Sigmoid colon (tissue), 7 donors: ENCODE measurements at regions of chr20 and their contacts with region 1.

Region 1: DNA sequence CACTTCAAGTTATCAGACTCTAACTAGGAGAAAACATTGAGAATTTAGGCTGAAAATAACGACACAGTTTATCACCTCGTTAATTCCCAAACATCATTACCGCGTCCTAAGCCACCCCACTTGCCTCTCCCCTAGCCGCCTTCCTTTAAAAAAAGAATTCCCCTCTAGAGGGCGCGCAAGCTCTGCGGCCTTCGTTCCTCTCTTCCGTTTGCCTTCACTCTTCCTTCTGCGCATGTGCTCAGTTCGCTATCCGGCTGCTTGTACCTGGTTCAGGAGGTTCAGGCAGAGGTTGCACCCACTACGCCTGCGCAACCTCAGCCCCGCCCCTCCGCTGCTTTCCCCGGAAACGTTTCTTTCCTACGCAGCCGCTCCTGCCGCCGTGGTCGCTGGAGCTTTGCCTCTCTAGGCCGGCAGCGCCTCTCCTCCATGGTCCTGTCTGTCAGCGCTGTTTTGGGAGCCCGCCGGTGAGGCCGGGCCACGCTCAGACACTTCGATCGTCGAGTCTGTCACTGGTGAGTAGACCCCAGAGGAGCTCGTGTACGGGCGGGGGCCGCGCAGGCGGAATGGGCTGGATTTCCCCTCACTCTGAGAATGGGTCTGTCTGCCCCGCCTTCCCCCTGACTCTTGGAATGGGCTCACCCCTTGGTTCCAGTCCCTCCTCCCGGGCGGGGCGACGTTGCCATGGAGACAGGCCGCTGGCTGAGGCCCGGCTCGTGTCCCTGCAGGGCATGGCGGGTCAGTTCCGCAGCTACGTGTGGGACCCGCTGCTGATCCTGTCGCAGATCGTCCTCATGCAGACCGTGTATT is at the start of gene SYS1:
- DNase-seq: peak; percentile 99
- H3K4me3 ChIP-seq: peak within 1 kb of the TSS; percentile 54 to 72 (median 67)
- H3K27ac ChIP-seq: peak within 1 kb of the TSS; percentile 88 to 96 (median 94)
- H3K4me1 ChIP-seq: peaks cover 0 to 56% (median 52%) of the 10 kb centered on the region in 4 donors
- H3K27me3 ChIP-seq: no peaks in the 10 kb centered on the region
- CTCF ChIP-seq: peak; percentile 83 to 96 (median 91)
- EP300 ChIP-seq: peak in 1 of 4 donors; percentile 72
- POLR2A ChIP-seq: peak; percentile 85 to 91
- total RNA-seq, gene SYS1: 44.2 to 58.7 (median 52.2) TPM

Region 2: GRCh38 chr20:45322952-45323383 is 40.0 kb before region 1 on chr20:
- intact Hi-C with region 1: loop called (anchors 5 kb)
- DNase-seq: peak; percentile 79
- H3K4me3 ChIP-seq: no peak overlapping the region
- H3K27ac ChIP-seq: peak overlapping the region in 2 of 4 donors; percentile 49 to 59
- H3K4me1 ChIP-seq: no peaks in the 10 kb centered on the region
- H3K27me3 ChIP-seq: no peaks in the 10 kb centered on the region
- CTCF ChIP-seq: no peak
- EP300 ChIP-seq: no peak
- POLR2A ChIP-seq: no peak

Region 3: GRCh38 chr20:45347936-45348778 is 14.8 kb before region 1 on chr20 and contains the start of gene SDC4:
- intact Hi-C with region 1: loop called (anchors 2 kb)
- DNase-seq: peak; percentile 91
- H3K4me3 ChIP-seq: peak within 1 kb of the TSS; percentile 87 to 94 (median 90)
- H3K27ac ChIP-seq: peak within 1 kb of the TSS; percentile 94 to 99 (median 97)
- H3K4me1 ChIP-seq: peaks cover 0 to 49% (median 45%) of the 10 kb centered on the region in 4 donors
- H3K27me3 ChIP-seq: no peaks in the 10 kb centered on the region
- CTCF ChIP-seq: no peak
- EP300 ChIP-seq: no peak
- POLR2A ChIP-seq: peak; percentile 97 to 98
- total RNA-seq, gene SDC4: 79.9 to 149 (median 88.5) TPM

Region 4: DNA sequence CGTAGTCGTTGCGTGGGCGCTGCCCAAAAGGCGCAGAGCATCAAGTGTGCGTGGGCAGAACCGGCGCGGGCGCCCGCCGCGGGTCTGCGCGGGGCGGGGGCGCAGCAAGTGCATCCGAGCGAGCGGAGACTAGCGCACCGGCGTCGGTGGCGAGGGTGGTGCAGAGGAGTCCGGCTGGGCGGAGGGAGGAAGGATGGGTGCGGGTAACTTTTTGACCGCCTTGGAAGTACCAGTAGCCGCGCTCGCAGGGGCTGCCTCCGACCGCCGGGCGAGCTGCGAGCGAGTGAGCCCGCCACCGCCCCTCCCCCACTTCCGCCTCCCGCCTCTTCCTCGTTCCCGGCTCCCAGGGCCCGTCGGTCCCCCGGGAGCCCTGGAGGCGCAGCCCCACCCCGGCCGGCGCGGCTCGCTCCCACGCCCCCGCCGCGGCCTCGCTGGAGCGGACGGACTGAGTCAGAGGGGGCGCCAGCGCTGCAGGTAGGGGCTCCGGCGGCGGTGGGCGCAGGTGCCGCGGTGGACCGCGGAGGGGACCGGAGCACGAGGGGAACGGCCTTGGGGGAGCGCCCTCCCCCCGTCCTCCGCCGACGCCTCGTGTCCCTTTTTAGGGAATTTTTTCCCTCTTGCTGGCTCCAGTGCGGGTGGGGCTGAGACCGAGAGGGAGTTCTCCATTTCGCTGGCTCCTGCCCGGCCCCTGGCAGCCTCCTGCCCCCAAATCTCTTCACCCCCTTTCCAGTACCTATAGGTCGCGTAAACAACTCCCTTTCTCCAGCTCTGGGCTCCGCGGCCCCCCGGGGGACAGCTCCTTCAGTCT is 43.5 kb after region 1 on chr20:
- intact Hi-C with region 1: loop called (anchors 2 kb)
- DNase-seq: peak; percentile 91
- H3K4me3 ChIP-seq: peak overlapping the region; percentile 84 to 97 (median 92)
- H3K27ac ChIP-seq: peak overlapping the region; percentile 94 to 99 (median 97)
- H3K4me1 ChIP-seq: peaks cover 0 to 42% (median 25%) of the 10 kb centered on the region in 4 donors
- H3K27me3 ChIP-seq: no peaks in the 10 kb centered on the region
- CTCF ChIP-seq: no peak
- EP300 ChIP-seq: no peak
- POLR2A ChIP-seq: peak in 1 of 2 donors; percentile 9

Region 5: DNA sequence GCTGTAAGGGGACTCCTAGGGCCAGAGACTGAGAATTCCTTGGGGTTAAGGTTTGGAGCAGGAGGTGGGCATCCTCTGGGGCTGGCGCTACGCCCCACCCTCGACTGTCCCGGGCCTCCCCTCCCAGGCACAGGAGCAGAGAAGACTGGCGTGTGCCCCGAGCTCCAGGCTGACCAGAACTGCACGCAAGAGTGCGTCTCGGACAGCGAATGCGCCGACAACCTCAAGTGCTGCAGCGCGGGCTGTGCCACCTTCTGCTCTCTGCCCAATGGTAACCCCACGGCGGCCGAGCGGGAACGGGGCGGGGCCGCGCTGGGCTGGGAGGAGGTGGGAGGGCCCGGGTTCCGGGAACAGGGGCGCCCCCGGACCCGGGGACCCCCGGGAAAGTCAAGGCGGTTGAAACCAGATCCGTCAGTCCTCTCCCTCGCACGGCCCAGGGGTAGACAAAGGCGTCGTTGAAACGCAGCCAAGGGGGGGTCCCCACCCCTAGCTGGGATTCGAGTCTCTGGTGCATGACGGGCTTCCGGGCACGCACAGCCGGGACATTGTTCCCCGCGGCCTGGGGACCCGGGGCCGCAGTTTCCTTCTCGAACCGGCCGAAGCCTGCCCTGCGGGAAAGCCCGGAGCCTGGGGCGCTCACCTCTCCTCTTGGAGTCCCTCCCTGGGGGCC is 107.4 kb after region 1 on chr20:
- intact Hi-C with region 1: loop called (anchors 2 kb)
- DNase-seq: peak; percentile 87
- H3K4me3 ChIP-seq: peak overlapping the region; percentile 36 to 60 (median 50)
- H3K27ac ChIP-seq: peak overlapping the region; percentile 23 to 92 (median 86)
- H3K4me1 ChIP-seq: peaks cover 0 to 44% (median 32%) of the 10 kb centered on the region in 4 donors
- H3K27me3 ChIP-seq: no peaks in the 10 kb centered on the region
- CTCF ChIP-seq: no peak
- EP300 ChIP-seq: no peak
- POLR2A ChIP-seq: peak; percentile 31 to 56

Region 6: GRCh38 chr20:45576995-45577394 is 214.0 kb after region 1 on chr20:
- intact Hi-C with region 1: no loop called
- DNase-seq: no peak
- H3K4me3 ChIP-seq: no peak overlapping the region
- H3K27ac ChIP-seq: no peak overlapping the region
- H3K4me1 ChIP-seq: peaks cover 0 to 4% (median 0%) of the 10 kb centered on the region in 4 donors
- H3K27me3 ChIP-seq: no peaks in the 10 kb centered on the region
- CTCF ChIP-seq: no peak
- EP300 ChIP-seq: no peak
- POLR2A ChIP-seq: no peak

Region 7: DNA sequence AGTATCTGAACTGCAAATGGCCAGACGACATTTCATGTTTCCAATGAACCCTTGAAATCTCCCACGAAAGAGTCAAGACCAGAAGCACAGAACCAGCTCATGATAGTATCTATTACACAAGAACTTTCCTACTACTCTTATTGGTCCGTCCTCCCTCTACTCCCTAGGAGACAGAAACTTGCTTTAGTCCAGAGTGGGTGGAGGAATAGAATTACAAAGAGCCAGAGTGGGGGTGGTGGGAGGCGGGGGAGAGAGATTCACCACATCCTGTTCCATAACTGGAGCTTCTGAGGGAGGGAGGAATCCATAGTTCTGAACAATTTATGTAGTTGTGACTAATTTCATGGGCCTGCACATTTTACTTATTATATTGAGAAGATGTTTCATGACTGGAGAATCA is 248.0 kb after region 1 on chr20:
- intact Hi-C with region 1: no loop called
- DNase-seq: no peak
- H3K4me3 ChIP-seq: no peak overlapping the region
- H3K27ac ChIP-seq: no peak overlapping the region
- H3K4me1 ChIP-seq: no peaks in the 10 kb centered on the region
- H3K27me3 ChIP-seq: no peaks in the 10 kb centered on the region
- CTCF ChIP-seq: no peak
- EP300 ChIP-seq: no peak
- POLR2A ChIP-seq: no peak

Region 8: GRCh38 chr20:45779011-45779915 is 416.3 kb after region 1 on chr20:
- intact Hi-C with region 1: loop called (anchors 1 kb)
- DNase-seq: peak; percentile 98
- H3K4me3 ChIP-seq: no peak overlapping the region
- H3K27ac ChIP-seq: peak overlapping the region; percentile 89 to 94 (median 93)
- H3K4me1 ChIP-seq: peaks cover 0 to 75% (median 71%) of the 10 kb centered on the region in 4 donors
- H3K27me3 ChIP-seq: no peaks in the 10 kb centered on the region
- CTCF ChIP-seq: no peak
- EP300 ChIP-seq: peak; percentile 53 to 96 (median 92)
- POLR2A ChIP-seq: no peak

Region 9: GRCh38 chr20:45934586-45935415 is 571.8 kb after region 1 on chr20 and contains the start of gene PCIF1:
- intact Hi-C with region 1: loop called (anchors 10 kb)
- DNase-seq: peak; percentile 99
- H3K4me3 ChIP-seq: peak within 1 kb of the TSS; percentile 96 to 100 (median 98)
- H3K27ac ChIP-seq: peak within 1 kb of the TSS; percentile 98 to 100 (median 100)
- H3K4me1 ChIP-seq: peaks cover 0 to 35% (median 22%) of the 10 kb centered on the region in 4 donors
- H3K27me3 ChIP-seq: no peaks in the 10 kb centered on the region
- CTCF ChIP-seq: no peak
- EP300 ChIP-seq: no peak
- POLR2A ChIP-seq: peak; percentile 88 to 90
- total RNA-seq, gene PCIF1: 31.4 to 39.3 (median 32.5) TPM